HAP-1 (cell line): ENCODE measurements at regions of chr5 and their contacts with region 1.

Region 1: GRCh38 chr5:141412854-141413539 is at the start of gene PCDHGA10:
- DNase-seq: peak; percentile 66 to 85
- H3K4me3 ChIP-seq: peak within 1 kb of the TSS; percentile 57
- H3K4me1 ChIP-seq: no peaks in the 10 kb centered on the region; the same call in 1 of the 2 replicates
- H3K27me3 ChIP-seq: no peaks in the 10 kb centered on the region

Region 2: DNA sequence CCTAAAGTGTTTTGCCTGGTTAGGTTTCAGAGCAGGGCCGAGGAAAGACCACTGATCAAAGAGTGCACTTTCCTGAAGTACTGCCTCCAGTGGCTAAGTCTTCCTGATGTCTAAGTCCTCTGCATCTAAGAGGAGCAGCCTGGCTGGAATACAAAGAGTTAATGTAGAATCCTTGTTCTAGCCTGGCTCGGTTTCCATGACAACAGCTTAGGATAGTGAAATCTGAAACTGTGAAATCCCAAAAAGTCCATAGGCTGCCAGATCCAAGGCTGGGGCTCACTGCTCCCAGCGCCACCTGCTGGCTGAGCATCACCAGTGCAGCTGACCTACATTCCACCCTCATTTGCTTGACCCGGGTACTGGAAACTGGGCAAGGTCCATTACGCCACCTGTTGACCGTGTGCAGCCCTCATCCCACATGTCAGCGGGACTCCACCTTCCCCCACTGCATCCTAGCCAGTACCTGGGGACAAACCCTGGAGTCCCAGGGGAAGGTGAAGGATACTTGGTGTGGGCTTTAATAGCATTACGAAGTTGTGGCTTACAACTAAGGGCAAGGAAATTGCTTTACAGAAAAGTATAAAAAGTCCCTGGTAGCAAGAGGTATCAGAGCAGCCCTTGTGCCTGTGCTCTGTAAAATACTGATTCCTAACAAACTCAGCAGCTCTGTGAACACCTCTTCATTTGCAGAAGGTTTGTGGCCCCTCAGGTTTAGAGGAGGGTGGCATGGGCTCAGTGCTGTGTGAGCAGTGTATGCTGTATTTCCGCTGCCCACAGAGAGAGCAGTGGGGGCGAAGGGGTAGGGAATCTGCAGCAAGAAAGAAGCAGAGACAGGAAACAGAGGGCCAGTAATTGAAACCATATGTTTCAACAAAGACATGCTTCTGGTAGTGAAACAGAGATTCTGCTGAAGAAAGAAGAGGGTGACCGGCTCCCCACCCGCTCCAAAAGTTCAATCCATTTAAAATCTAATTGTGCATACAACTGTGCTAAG is 111.9 kb after region 1 on chr5:
- in situ Hi-C with region 1: loop called (anchors 10 kb)
- DNase-seq: peak; percentile 88 to 94
- H3K4me3 ChIP-seq: no peak overlapping the region
- H3K4me1 ChIP-seq: peaks cover 18% of the 10 kb centered on the region
- H3K27me3 ChIP-seq: no peaks in the 10 kb centered on the region

Region 3: GRCh38 chr5:142012792-142013388 is 599.9 kb after region 1 on chr5 and contains the start of gene GNPDA1:
- in situ Hi-C with region 1: no loop called
- DNase-seq: peak; percentile 49 to 80
- H3K4me3 ChIP-seq: peak within 1 kb of the TSS; percentile 49
- H3K4me1 ChIP-seq: peaks cover 9% of the 10 kb centered on the region; the same call in 1 of the 2 replicates
- H3K27me3 ChIP-seq: no peaks in the 10 kb centered on the region